Mammary epithelial cell (primary cell): ENCODE measurements at regions of chr14 and their contacts with region 1.

Region 1: DNA sequence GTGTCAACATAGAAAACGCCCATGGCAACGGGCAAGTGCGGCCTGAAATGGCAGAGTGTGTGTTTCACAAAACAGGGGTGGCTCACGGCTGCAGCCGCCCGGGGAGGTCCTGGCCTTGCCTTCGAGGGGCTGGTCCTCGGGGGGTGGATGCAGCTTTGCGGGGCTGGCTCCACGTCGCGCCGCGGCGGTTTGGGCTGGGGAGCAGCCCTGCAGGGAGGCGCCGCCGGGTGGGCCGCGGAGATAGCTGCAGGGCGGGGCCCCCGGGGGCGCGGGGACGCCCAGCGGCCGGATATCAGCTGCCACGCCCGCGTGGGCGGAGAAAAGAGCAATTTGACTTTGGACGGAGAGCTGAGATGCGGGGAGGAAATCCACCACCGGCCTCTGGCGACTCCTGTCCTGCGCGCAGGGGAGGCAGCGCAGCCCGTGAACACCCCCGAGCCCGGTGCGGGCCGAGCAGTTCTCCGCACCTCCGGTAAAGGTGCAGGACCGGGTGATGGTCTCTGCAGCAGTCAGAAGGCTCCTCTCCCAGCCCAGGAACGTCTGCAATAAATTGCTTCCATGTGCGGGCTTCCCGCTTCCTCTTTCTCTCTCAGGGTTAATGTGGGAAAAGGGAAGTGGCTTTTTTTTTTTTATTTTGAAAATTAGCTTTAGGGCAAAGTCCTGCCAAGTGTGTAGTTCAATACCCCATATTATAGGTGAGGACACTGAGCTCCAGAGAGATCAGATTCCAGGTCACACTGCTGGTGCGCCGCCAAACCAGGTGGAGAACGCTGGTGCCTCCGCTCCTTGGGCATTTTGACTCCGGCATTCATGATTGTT is 110.5 kb downstream of the ARF6 start:
- DNase-seq: peak; percentile 78
- H3K4me3 ChIP-seq: peak overlapping the region; percentile 32 to 46 (median 42)
- H3K27ac ChIP-seq: peak overlapping the region; percentile 97
- H3K4me1 ChIP-seq: peaks cover 73% of the 10 kb centered on the region
- H3K27me3 ChIP-seq: no peaks in the 10 kb centered on the region
- CTCF ChIP-seq: peak in 1 of 2 donors; percentile 21

Region 2: GRCh38 chr14:49862089-49862673 is 141.2 kb before region 1 on chr14:
- CTCF ChIA-PET with region 1: no interaction called
- dilution Hi-C with region 1: no loop called
- in situ Hi-C with region 1: loop called in 1 of 2 experiments (anchors 5 kb)
- intact Hi-C with region 1: loop called (anchors 1 kb)
- DNase-seq: peak; percentile 79
- H3K4me3 ChIP-seq: peak overlapping the region; percentile 72 to 87 (median 82)
- H3K27ac ChIP-seq: peak overlapping the region; percentile 94
- H3K4me1 ChIP-seq: peaks cover 13% of the 10 kb centered on the region
- H3K27me3 ChIP-seq: no peaks in the 10 kb centered on the region
- CTCF ChIP-seq: peak; percentile 100

Region 3: GRCh38 chr14:49892636-49893308 is 110.7 kb before region 1 on chr14 and contains the start of gene ARF6:
- CTCF ChIA-PET with region 1: no interaction called
- dilution Hi-C with region 1: no loop called
- in situ Hi-C with region 1: loop called (anchors 5 to 10 kb)
- intact Hi-C with region 1: loop called (anchors 1 kb)
- DNase-seq: peak; percentile 97
- H3K4me3 ChIP-seq: peak within 1 kb of the TSS; percentile 87 to 100 (median 96)
- H3K27ac ChIP-seq: peak within 1 kb of the TSS; percentile 94
- H3K4me1 ChIP-seq: peaks cover 11% of the 10 kb centered on the region
- H3K27me3 ChIP-seq: no peaks in the 10 kb centered on the region
- CTCF ChIP-seq: peak in 1 of 2 donors; percentile 39
- total RNA-seq, gene ARF6: 85.5 to 132 TPM

Region 4: GRCh38 chr14:49959822-49960408 is 43.5 kb before region 1 on chr14:
- CTCF ChIA-PET with region 1: no interaction called
- dilution Hi-C with region 1: loop called (anchors 5 kb)
- in situ Hi-C with region 1: no loop called
- intact Hi-C with region 1: no loop called
- DNase-seq: no peak
- H3K4me3 ChIP-seq: no peak overlapping the region
- H3K27ac ChIP-seq: no peak overlapping the region
- H3K4me1 ChIP-seq: peaks cover 26% of the 10 kb centered on the region
- H3K27me3 ChIP-seq: no peaks in the 10 kb centered on the region
- CTCF ChIP-seq: no peak

Region 5: GRCh38 chr14:50060871-50061663 is 57.6 kb after region 1 on chr14:
- CTCF ChIA-PET with region 1: no interaction called
- dilution Hi-C with region 1: no loop called
- in situ Hi-C with region 1: no loop called
- intact Hi-C with region 1: loop called (anchors 1 kb)
- DNase-seq: peak; percentile 99
- H3K4me3 ChIP-seq: no peak overlapping the region
- H3K27ac ChIP-seq: peak overlapping the region; percentile 84
- H3K4me1 ChIP-seq: peaks cover 34% of the 10 kb centered on the region
- H3K27me3 ChIP-seq: no peaks in the 10 kb centered on the region
- CTCF ChIP-seq: peak in 1 of 2 donors; percentile 20

Region 6: DNA sequence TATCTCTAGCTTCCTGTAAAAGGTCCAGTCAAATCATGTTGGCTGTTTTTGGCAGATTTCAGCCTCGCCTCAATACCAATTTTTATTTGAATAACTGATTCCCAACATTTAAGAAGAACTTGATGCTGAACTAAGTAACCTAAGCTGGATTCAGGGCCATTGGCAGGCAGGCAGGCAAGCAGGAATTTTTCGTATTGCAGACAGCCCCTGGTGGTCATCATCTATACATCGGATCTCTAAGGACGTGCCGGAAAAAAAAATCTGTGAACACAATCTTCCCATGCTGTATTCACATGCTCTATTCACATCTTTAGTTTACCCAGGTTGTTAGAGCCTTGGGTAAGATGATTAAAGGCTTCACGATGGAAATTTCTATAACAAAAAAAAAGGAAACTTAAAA is 105.9 kb after region 1 on chr14:
- CTCF ChIA-PET with region 1: no interaction called
- dilution Hi-C with region 1: loop called (anchors 5 kb)
- in situ Hi-C with region 1: no loop called
- intact Hi-C with region 1: loop called (anchors 2 kb)
- DNase-seq: no peak
- H3K4me3 ChIP-seq: no peak overlapping the region
- H3K27ac ChIP-seq: no peak overlapping the region
- H3K4me1 ChIP-seq: peaks cover under 1% of the 10 kb centered on the region
- H3K27me3 ChIP-seq: no peaks in the 10 kb centered on the region
- CTCF ChIP-seq: peak; percentile 16 to 19

Region 7: GRCh38 chr14:50985124-50985858 is 981.9 kb after region 1 on chr14:
- CTCF ChIA-PET with region 1: no interaction called
- dilution Hi-C with region 1: no loop called
- in situ Hi-C with region 1: no loop called
- intact Hi-C with region 1: no loop called
- DNase-seq: no peak
- H3K4me3 ChIP-seq: no peak overlapping the region
- H3K27ac ChIP-seq: no peak overlapping the region
- H3K4me1 ChIP-seq: no peaks in the 10 kb centered on the region
- H3K27me3 ChIP-seq: peaks cover 7% of the 10 kb centered on the region
- CTCF ChIP-seq: no peak